PC-9 (cell line): ENCODE measurements at regions of chr3 and their contacts with region 1.

Region 1: GRCh38 chr3:132416807-132417694 is at the start of gene DNAJC13:
- DNase-seq: peak; percentile 83 to 90
- H3K4me3 ChIP-seq: peak within 1 kb of the TSS; percentile 89
- H3K27ac ChIP-seq: peak within 1 kb of the TSS; percentile 81
- H3K4me1 ChIP-seq: peaks cover 22% of the 10 kb centered on the region
- H3K27me3 ChIP-seq: no peaks in the 10 kb centered on the region
- CTCF ChIP-seq: no peak
- total RNA-seq, gene DNAJC13: 44.6 and 56.6 TPM in 2 replicates

Region 2: GRCh38 chr3:131786386-131786785 is 630.7 kb before region 1 on chr3:
- CTCF ChIA-PET with region 1: no interaction called
- POLR2A ChIA-PET with region 1: no interaction called
- intact Hi-C with region 1: no loop called
- DNase-seq: no peak
- H3K4me3 ChIP-seq: no peak overlapping the region
- H3K27ac ChIP-seq: no peak overlapping the region
- H3K4me1 ChIP-seq: no peaks in the 10 kb centered on the region
- H3K27me3 ChIP-seq: no peaks in the 10 kb centered on the region
- CTCF ChIP-seq: no peak

Region 3: DNA sequence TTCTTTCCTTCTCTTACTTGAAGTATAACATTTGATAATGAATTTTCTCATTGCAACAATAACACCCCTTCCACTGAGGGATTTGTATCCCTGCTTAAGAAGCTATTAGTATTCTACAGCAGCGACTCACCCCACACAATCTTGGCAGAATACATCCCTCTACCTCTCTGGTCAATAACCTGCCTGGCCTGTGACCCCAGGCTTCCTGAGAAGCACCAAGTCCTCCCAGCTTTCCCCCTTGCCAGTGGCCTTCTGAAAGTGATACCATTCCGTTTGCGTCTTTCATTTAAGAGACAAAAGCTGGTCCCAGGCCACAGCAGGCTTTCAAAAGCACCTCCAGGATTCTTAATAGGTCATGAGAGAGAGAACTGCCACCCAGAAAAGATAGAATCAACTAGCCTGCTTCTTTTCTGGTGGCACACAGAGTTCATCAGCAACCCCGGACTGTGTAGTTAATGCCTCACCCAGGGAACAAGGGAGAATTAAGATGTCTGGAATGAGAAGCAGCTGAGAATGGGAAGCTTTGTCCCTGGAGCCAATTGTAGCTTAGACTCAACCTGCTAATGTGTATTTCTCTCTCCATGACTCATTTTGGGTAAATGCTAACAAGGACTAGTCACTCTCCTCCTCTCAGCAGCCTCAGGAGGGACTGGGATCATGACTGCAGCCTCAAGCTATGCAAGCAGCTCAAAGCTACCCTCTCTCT is 281.3 kb before region 1 on chr3:
- CTCF ChIA-PET with region 1: no interaction called
- POLR2A ChIA-PET with region 1: interaction called, 20 read pairs
- intact Hi-C with region 1: loop called (anchors 5 kb)
- DNase-seq: peak; percentile 71 to 97
- H3K4me3 ChIP-seq: peak overlapping the region; percentile 52
- H3K27ac ChIP-seq: peak overlapping the region; percentile 100
- H3K4me1 ChIP-seq: peaks cover 50% of the 10 kb centered on the region
- H3K27me3 ChIP-seq: no peaks in the 10 kb centered on the region
- CTCF ChIP-seq: no peak

Region 4: GRCh38 chr3:132317229-132317948 is 99.7 kb before region 1 on chr3 and contains the start of gene ACP3:
- CTCF ChIA-PET with region 1: no interaction called
- POLR2A ChIA-PET with region 1: interaction called, 14 read pairs
- intact Hi-C with region 1: no loop called
- DNase-seq: peak; percentile 69 to 95
- H3K4me3 ChIP-seq: peak within 1 kb of the TSS; percentile 37; the same call in 1 of the 2 replicates
- H3K27ac ChIP-seq: peak within 1 kb of the TSS; percentile 94
- H3K4me1 ChIP-seq: peaks cover 35% of the 10 kb centered on the region
- H3K27me3 ChIP-seq: no peaks in the 10 kb centered on the region
- CTCF ChIP-seq: no peak
- total RNA-seq, gene ACP3: 1.5 and 3.5 TPM in 2 replicates

Region 5: DNA sequence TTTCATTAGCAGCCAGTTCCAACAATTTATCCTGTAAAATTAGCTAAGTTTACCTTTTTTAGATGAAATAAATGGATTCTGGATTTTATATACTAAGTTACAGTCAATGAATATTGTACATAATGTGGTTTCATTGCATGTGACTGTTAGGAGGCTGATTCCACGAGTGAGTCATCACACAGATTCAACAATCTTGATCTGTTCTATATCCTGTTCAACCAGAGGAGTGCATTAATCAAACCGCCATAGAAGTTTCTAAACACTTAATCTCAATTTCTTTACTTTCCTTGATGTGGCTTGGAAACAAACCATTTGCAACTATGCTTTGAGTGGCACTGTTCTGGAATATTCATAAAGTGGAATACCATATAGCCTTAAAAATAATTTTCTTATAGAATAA is 15.6 kb after region 1 on chr3:
- CTCF ChIA-PET with region 1: no interaction called
- POLR2A ChIA-PET with region 1: interaction called, 10 read pairs
- intact Hi-C with region 1: no loop called
- DNase-seq: peak; percentile 5 to 67
- H3K4me3 ChIP-seq: no peak overlapping the region
- H3K27ac ChIP-seq: peak overlapping the region; percentile 70
- H3K4me1 ChIP-seq: peaks cover 14% of the 10 kb centered on the region
- H3K27me3 ChIP-seq: no peaks in the 10 kb centered on the region
- CTCF ChIP-seq: no peak